K562 (cell line): ENCODE measurements at regions of chr9 and their contacts with region 1.

Region 1: DNA sequence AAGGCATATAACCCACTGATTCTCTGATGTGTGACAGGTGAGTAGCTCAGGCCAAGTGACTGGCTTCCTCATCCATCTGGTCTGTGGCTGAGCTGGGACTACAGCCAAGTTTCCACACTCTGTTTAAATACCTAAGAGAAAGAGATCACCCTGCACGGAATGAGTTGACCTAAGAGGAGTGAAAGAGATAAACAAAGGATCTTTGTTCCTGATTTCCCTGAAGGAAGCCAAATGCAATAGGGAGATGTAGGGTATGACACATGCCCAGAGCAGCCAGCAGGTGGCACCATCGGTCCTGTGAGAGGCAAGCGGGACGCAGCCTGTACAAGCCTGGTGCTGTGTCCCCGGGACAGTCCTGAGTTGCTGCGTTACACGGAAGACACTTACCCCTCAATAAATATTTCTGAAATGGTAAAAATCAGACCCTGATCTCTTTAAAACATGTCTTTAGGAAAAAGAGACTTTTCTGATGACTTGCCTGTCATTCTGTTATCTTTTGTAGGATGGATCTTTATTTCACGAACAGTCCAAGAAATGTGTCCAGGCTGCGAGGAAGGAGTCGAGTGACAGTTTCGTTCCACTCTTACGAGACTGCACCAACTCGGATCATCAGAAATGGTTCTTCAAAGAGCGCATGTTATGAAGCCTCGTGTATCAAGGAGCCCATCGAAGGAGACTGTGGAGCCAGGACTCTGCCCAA is 41.1 kb downstream of the GALNT12 start:
- DNase-seq: peak; percentile 79 to 93 (median 82)
- ATAC-seq: peak; percentile 94
- H3K4me3 ChIP-seq: no peak overlapping the region
- H3K27ac ChIP-seq: peak overlapping the region; percentile 28
- H3K4me1 ChIP-seq: peaks cover 8 to 45% of the 10 kb centered on the region in 2 experiments; a peak in 4 of 5 replicates
- H3K27me3 ChIP-seq: no peaks in the 10 kb centered on the region
- CTCF ChIP-seq: peak; percentile 93 to 98 (median 96)
- EP300 ChIP-seq: peak; percentile 19; the same call in 1 of the 2 replicates
- POLR2A ChIP-seq: no peak
- RAD21 ChIP-seq: peak; percentile 95 to 96

Region 2: DNA sequence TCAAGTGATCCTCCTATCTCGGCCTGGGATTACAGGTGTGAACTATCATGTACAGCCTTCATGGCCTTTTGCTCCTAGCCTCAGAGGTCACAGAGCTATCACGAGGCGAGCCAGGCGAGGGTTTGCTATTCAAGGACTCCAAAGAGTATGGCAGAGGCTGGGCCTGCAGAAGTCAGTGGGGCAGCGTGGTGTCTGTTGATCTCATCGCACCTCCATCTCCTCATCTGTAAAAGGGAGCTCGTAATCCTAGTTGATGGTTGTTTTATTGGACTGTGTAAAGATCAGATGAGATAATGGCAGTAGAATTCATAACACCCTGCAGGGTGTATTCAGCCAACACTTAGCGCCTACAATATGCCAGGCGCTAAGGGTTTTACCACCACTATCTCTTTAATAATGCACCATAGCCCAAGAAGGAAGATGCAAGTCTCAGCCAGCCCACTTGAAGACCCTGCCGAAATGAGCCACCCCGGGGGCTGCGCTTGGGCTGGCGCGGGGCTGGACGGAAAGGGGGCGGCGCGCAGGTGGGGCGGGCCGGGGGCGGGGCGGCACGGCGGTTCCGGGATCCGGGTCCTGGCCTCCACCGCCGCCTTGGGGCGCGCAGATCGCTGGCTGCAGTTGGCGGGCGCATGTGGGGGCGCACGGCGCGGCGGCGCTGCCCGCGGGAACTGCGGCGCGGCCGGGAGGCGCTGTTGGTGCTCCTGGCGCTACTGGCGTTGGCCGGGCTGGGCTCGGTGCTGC is 41.4 kb before region 1 on chr9 and contains the start of gene GALNT12:
- CTCF ChIA-PET with region 1: no interaction called
- POLR2A ChIA-PET with region 1: no interaction called
- in situ Hi-C with region 1: no loop called
- intact Hi-C with region 1: loop called (anchors 5 kb)
- DNase-seq: peak; percentile 80 to 92 (median 89)
- ATAC-seq: peak; percentile 75
- H3K4me3 ChIP-seq: peak within 1 kb of the TSS; percentile 66
- H3K27ac ChIP-seq: peak within 1 kb of the TSS; percentile 59
- H3K4me1 ChIP-seq: peaks cover 31 to 57% of the 10 kb centered on the region in 2 experiments
- H3K27me3 ChIP-seq: no peaks in the 10 kb centered on the region
- CTCF ChIP-seq: peak in 1 of 3 experiments; percentile 41; a peak in 1 of 6 replicates
- EP300 ChIP-seq: no peak
- POLR2A ChIP-seq: no peak
- RAD21 ChIP-seq: no peak
- polyA plus RNA-seq, gene GALNT12: 29.7 to 33.7 TPM

Region 3: GRCh38 chr9:98906262-98907040 is 57.9 kb after region 1 on chr9:
- CTCF ChIA-PET with region 1: interaction called, 3 read pairs
- POLR2A ChIA-PET with region 1: no interaction called
- in situ Hi-C with region 1: no loop called
- intact Hi-C with region 1: loop called (anchors 1 kb)
- DNase-seq: peak; percentile 63 to 84 (median 68)
- ATAC-seq: peak; percentile 68
- H3K4me3 ChIP-seq: no peak overlapping the region
- H3K27ac ChIP-seq: no peak overlapping the region
- H3K4me1 ChIP-seq: peaks cover 7 to 39% of the 10 kb centered on the region in 2 experiments
- H3K27me3 ChIP-seq: no peaks in the 10 kb centered on the region
- CTCF ChIP-seq: no peak
- EP300 ChIP-seq: no peak
- POLR2A ChIP-seq: no peak
- RAD21 ChIP-seq: no peak

Region 4: GRCh38 chr9:98974994-98975712 is 126.6 kb after region 1 on chr9:
- CTCF ChIA-PET with region 1: interaction called, 13 read pairs
- POLR2A ChIA-PET with region 1: no interaction called
- in situ Hi-C with region 1: no loop called
- intact Hi-C with region 1: loop called (anchors 1 kb)
- DNase-seq: peak; percentile 88 to 91 (median 90)
- ATAC-seq: peak; percentile 92
- H3K4me3 ChIP-seq: peak overlapping the region; percentile 25; the same call in 1 of the 2 replicates
- H3K27ac ChIP-seq: no peak overlapping the region
- H3K4me1 ChIP-seq: peaks cover 27% of the 10 kb centered on the region in 2 experiments; a peak in 4 of 5 replicates
- H3K27me3 ChIP-seq: no peaks in the 10 kb centered on the region
- CTCF ChIP-seq: peak; percentile 99
- EP300 ChIP-seq: no peak
- POLR2A ChIP-seq: no peak
- RAD21 ChIP-seq: peak; percentile 81 to 90

Region 5: GRCh38 chr9:99130069-99130468 is 281.5 kb after region 1 on chr9:
- CTCF ChIA-PET with region 1: no interaction called
- POLR2A ChIA-PET with region 1: no interaction called
- in situ Hi-C with region 1: loop called (anchors 5 kb)
- intact Hi-C with region 1: no loop called
- DNase-seq: no peak
- ATAC-seq: peak; percentile 36; the same call in 2 of the 3 replicates
- H3K4me3 ChIP-seq: no peak overlapping the region
- H3K27ac ChIP-seq: no peak overlapping the region
- H3K4me1 ChIP-seq: peaks cover 0 to 38% of the 10 kb centered on the region in 2 experiments; a peak in 3 of 5 replicates
- H3K27me3 ChIP-seq: no peaks in the 10 kb centered on the region
- CTCF ChIP-seq: no peak
- EP300 ChIP-seq: no peak
- POLR2A ChIP-seq: no peak
- RAD21 ChIP-seq: no peak